Activated naive CD4-positive, alpha-beta T cell treated with anti-CD3 and anti-CD28 coated beads for 36 hours (primary cell): ENCODE measurements at regions of chr16 and their contacts with region 1.

Region 1: GRCh38 chr16:4416200-4417032 is at the start of gene CORO7:
- DNase-seq: peak; percentile 95
- H3K4me3 Mint-ChIP-seq: peak within 1 kb of the TSS; percentile 89
- H3K27ac Mint-ChIP-seq: peak within 1 kb of the TSS; percentile 89
- H3K4me1 Mint-ChIP-seq: peaks cover 33% of the 10 kb centered on the region
- H3K27me3 Mint-ChIP-seq: no peaks in the 10 kb centered on the region
- total RNA-seq, gene CORO7: 39.7 to 43.3 TPM

Region 2: GRCh38 chr16:4271176-4272066 is 145.0 kb before region 1 on chr16:
- CTCF ChIA-PET with region 1: no interaction called
- intact Hi-C with region 1: loop called (anchors 5 kb)
- DNase-seq: peak; percentile 95
- H3K4me3 Mint-ChIP-seq: peak overlapping the region; percentile 86
- H3K27ac Mint-ChIP-seq: peak overlapping the region; percentile 94
- H3K4me1 Mint-ChIP-seq: peaks cover 12% of the 10 kb centered on the region
- H3K27me3 Mint-ChIP-seq: no peaks in the 10 kb centered on the region

Region 3: DNA sequence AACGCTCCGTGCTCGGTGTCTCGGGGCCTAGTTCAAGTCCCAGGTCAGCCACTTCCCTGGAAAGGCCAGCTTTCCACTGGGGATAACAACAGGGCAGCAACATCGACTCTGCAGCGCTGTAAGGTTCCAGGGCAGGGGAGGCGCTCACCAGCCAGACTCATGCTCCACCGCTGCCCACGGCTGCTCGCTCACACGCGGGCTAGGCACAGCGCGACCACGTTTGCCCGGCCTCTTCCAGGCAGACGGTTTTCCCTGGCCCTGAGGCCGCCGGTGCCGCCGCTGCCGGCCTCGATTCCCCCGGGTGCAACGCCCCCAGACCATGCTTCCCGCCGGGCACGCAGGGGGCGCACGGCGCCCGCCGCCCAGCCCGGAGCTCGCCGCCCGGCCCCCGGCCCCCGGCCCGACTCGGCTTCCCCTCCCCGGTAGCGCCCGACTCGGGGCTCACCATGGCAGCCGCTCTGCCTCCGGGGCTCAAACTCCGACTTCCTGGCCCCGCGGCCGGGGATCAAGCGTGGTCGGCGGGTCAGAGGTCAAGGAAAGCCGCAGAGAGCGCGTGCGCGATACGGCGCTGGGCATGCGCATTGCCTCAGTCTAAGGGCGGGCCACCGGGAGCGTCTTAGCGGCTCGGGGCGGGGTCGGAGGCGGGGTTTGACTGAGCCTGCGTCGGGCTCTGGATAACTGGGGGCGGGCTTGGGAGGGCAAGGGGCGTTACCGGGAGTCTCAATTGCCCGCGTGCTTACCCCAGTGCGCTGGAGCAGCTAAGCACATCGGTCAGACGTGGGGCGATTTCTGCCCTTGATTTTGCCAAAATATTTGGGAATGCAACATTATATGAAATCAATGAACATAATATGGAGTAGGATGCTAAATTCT is 65.4 kb before region 1 on chr16 and contains the start of gene PAM16:
- CTCF ChIA-PET with region 1: no interaction called
- intact Hi-C with region 1: loop called (anchors 1 kb)
- DNase-seq: peak; percentile 98
- H3K4me3 Mint-ChIP-seq: peak within 1 kb of the TSS; percentile 98
- H3K27ac Mint-ChIP-seq: peak within 1 kb of the TSS; percentile 84
- H3K4me1 Mint-ChIP-seq: peaks cover 40% of the 10 kb centered on the region
- H3K27me3 Mint-ChIP-seq: no peaks in the 10 kb centered on the region
- total RNA-seq, gene PAM16: 67.8 to 71.3 TPM

Region 4: DNA sequence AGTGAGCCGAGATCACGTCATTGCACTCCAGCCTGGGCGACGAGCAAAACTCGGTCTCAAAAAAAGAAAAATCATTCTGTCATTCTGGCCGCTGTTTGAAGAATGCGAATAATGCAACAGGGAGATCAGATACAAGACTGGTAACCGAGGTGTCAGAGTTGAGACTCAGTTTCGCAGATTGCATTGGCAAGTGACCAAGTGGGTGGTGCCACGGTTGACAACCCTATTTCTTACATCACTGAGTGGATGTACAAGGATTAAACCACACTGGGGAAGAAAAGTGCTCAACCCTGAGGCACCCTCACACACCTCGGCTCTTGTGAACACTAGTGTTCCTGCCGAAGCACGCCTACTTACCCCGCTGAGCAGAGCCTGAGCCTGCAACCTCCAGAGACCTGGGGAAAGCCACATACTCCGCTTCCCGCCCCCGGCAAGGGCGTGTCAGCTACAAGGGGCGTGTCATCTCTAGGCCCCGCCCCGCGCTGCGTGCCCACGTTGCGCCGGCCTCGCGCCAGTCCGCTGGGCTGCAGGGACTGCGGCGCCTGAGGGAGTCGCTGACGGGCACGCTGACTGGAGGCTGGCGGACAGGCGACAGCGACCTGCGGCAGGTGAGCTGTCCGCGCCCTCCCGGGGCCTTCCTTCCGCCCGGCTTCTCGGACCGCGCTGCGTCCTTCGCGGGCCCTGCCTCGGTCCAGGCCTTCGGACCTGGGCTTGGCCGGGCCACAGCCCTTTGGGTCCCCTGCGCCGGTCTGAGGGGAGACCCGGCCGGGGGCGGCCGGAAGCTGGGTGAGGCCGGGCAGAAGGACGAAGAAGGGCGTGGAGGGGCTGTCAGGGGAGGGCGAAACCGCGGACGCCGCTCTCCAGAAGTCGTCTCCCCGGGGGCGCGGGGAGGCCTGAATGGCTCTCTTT is 59.7 kb after region 1 on chr16 and contains the start of gene HMOX2:
- CTCF ChIA-PET with region 1: no interaction called
- intact Hi-C with region 1: loop called (anchors 1 kb)
- DNase-seq: peak; percentile 95
- H3K4me3 Mint-ChIP-seq: peak within 1 kb of the TSS; percentile 89
- H3K27ac Mint-ChIP-seq: peak within 1 kb of the TSS; percentile 82
- H3K4me1 Mint-ChIP-seq: peaks cover 42% of the 10 kb centered on the region
- H3K27me3 Mint-ChIP-seq: no peaks in the 10 kb centered on the region
- total RNA-seq, gene HMOX2: 46.8 to 49.3 TPM

Region 5: GRCh38 chr16:4624015-4624826 is 207.8 kb after region 1 on chr16 and contains the start of gene MGRN1:
- CTCF ChIA-PET with region 1: no interaction called
- intact Hi-C with region 1: loop called (anchors 2 kb)
- DNase-seq: peak; percentile 96
- H3K4me3 Mint-ChIP-seq: peak within 1 kb of the TSS; percentile 97
- H3K27ac Mint-ChIP-seq: peak within 1 kb of the TSS; percentile 99
- H3K4me1 Mint-ChIP-seq: peaks cover 30% of the 10 kb centered on the region
- H3K27me3 Mint-ChIP-seq: no peaks in the 10 kb centered on the region
- total RNA-seq, gene MGRN1: 46.3 to 48.8 TPM

Region 6: GRCh38 chr16:5758281-5758680 is 1341.9 kb after region 1 on chr16:
- CTCF ChIA-PET with region 1: no interaction called
- intact Hi-C with region 1: no loop called
- DNase-seq: no peak
- H3K4me3 Mint-ChIP-seq: no peak overlapping the region
- H3K27ac Mint-ChIP-seq: no peak overlapping the region
- H3K4me1 Mint-ChIP-seq: no peaks in the 10 kb centered on the region
- H3K27me3 Mint-ChIP-seq: no peaks in the 10 kb centered on the region